Right cardiac atrium (tissue), 5 donors: ENCODE measurements at regions of chr10 and their contacts with region 1.

Region 1: GRCh38 chr10:95640891-95641315 is 15.6 kb downstream of the ALDH18A1 start:
- DNase-seq: no peak
- ATAC-seq: no peak
- H3K4me3 ChIP-seq: no peak overlapping the region
- H3K27ac ChIP-seq: no peak overlapping the region
- H3K4me1 ChIP-seq: no peaks in the 10 kb centered on the region
- H3K27me3 ChIP-seq: no peaks in the 10 kb centered on the region

Region 2: DNA sequence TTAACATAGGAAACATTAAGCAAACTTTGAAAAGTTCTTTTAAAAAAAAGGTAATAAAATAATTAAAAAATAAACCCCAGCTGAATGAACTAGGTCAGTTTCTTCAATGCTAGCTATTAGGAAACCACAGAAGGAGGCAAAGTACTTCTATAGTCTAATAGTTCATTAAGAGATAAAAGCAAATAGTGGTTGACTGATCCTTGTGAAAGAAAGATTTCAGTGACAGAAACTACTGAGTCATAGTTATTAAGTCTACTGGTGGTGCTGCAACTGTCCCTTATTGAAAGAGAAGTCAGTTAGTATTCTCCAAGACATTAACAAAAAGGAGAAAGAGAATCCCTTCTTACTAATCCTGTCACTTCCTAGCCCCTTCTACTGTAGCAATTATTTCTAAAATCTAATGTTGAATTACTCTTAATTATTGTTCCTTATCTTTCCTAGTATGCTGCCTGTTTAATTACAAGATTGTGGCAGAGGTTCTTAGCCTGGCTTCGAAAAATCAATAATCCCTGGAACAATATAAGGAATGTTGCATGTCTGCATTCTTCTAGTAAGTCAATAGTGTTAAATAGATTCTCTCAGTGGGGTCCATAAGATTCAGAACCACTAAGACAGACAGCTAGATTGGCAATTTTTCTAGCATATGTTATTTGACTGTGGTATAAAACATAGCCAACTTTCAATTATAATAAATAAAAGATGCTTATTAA is 34.7 kb after region 1 on chr10:
- intact Hi-C with region 1: loop called in 1 of 4 experiments (anchors 2 kb)
- DNase-seq: no peak
- ATAC-seq: no peak
- H3K4me3 ChIP-seq: no peak overlapping the region
- H3K27ac ChIP-seq: no peak overlapping the region
- H3K4me1 ChIP-seq: no peaks in the 10 kb centered on the region
- H3K27me3 ChIP-seq: no peaks in the 10 kb centered on the region

Region 3: GRCh38 chr10:95755511-95756004 is 114.7 kb after region 1 on chr10:
- intact Hi-C with region 1: no loop called
- DNase-seq: peak in 2 of 3 donors; percentile 44
- ATAC-seq: peak; percentile 66 to 80
- H3K4me3 ChIP-seq: peak overlapping the region; percentile 68
- H3K27ac ChIP-seq: peak overlapping the region; percentile 66
- H3K4me1 ChIP-seq: no peaks in the 10 kb centered on the region
- H3K27me3 ChIP-seq: no peaks in the 10 kb centered on the region

Region 4: DNA sequence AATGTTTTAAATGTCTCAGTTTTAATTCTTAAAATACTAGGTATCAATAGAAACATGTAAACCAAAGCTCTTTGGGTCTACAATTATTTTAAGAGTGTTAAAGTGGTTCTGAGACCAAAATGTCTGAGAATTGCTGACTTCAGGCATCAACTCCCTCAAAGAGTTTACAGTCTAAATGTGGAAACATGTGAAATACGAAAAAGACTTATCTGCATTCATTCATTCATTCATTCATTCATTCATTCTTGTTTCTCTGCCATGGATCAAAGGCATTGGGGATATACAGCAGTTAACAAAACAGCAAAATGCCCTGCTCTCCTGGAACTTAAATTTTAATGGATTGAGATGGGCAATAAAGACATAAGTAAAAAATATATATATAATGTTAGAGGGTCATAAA is 560.6 kb after region 1 on chr10:
- intact Hi-C with region 1: no loop called
- DNase-seq: no peak
- ATAC-seq: no peak
- H3K4me3 ChIP-seq: no peak overlapping the region
- H3K27ac ChIP-seq: no peak overlapping the region
- H3K4me1 ChIP-seq: no peaks in the 10 kb centered on the region
- H3K27me3 ChIP-seq: no peaks in the 10 kb centered on the region